ENCODE measurements at regions of chr5 and their contacts with region 1.

Region 1: DNA sequence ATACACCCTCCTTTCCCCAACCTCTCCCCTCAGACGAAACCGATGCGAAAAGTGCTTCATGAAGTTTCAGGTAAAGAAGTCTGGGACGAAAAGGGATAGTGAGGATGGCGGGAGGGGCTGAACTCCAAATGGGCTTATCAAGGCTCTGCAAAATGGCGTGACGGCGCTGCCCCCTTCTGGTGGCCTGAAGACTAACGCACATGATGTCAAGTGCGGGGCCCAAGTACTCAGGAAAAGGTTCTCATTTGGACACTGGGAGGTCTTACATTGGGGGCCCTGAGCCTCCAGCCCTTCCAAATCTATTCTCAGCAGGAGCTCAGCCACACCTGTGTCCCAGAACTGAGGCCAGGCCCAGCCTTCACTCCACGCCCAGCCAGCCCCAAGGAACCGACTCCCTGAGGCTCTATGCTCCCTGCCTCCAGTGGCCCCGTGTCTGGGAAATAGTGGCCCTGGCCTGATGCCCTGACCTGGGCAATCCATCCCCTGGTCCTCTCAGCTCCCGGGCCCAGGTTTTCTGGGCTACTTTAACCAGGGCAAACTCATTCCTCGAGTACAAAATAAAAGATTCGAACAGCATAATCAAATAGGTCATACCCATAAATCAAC is 119.9 kb downstream of the KCNIP1 start:
- DNase-seq: peak; percentile 56
- H3K4me3 ChIP-seq: no peak overlapping the region
- H3K27ac ChIP-seq: no peak overlapping the region
- H3K4me1 ChIP-seq: no peaks in the 10 kb centered on the region
- H3K27me3 ChIP-seq: no peaks in the 10 kb centered on the region
- CTCF ChIP-seq: peak; percentile 67

Region 2: DNA sequence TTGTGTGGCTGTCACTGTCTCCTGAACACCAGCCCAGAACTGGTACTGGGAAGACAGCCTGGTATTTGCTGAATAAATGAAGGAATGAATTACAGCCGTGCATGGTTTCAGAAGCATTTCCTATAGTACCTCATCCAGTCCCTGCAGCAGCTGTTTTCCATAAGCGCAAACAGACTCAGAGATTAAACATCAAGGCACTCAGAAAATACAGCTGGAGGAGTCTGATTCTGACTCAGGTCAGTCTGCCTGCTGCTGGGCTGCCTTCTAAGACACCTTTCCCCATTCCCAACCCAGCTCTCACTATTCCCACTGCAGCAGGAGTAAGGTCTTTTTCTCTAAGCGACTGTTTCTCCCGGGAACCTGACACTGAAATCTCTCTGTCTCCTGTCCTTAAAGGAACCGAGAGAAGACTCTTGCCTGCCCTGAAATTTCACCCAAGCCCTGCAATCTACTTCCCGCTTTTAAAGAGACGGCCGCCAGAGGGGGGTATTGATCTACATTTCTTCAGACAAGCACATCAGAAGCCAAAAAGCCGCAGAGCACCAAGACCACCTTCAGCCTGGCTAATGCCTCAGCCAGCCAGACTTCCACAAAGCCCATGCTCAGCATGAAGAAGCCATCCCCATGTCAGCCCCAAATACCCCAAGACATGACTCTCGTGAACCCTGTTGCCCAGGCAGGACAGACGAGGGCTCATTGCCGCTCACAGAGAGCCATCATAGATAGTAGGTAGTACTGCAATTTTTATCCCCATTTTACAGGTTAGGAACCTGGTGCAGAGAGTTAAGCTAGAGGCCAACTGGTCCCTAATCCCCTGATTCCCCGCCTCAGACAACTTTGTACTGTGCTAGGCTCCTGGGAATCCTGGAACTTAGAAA is 523.4 kb before region 1 on chr5:
- CTCF ChIA-PET with region 1: no interaction called
- POLR2A ChIA-PET with region 1: no interaction called
- intact Hi-C with region 1: no loop called
- DNase-seq: peak; percentile 86
- H3K4me3 ChIP-seq: no peak overlapping the region
- H3K27ac ChIP-seq: no peak overlapping the region
- H3K4me1 ChIP-seq: no peaks in the 10 kb centered on the region
- H3K27me3 ChIP-seq: no peaks in the 10 kb centered on the region
- CTCF ChIP-seq: peak; percentile 71

Region 3: GRCh38 chr5:170434966-170435605 is 188.6 kb before region 1 on chr5:
- CTCF ChIA-PET with region 1: no interaction called
- POLR2A ChIA-PET with region 1: no interaction called
- intact Hi-C with region 1: loop called (anchors 2 kb)
- DNase-seq: peak; percentile 43
- H3K4me3 ChIP-seq: no peak overlapping the region
- H3K27ac ChIP-seq: no peak overlapping the region
- H3K4me1 ChIP-seq: peaks cover 6% of the 10 kb centered on the region
- H3K27me3 ChIP-seq: no peaks in the 10 kb centered on the region
- CTCF ChIP-seq: peak; percentile 87

Region 4: DNA sequence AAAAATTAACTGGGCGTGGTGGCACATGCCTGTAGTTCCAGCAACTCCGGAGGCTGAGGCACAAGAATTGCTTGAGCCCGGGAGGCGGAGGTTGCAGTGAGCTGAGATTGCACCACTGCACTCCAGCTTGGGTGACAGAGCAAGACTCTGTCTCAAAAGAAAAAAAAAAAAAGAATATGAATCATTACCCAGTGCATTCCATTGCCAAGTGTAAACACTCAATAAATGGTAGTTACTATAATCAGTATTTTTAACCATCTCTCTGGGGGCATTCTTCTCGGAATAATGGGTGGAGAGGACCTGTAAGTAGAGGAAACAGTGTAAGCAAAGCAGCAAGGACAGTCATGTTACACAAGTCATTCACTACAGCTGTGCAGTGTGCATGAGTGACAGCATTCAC is 224.4 kb after region 1 on chr5:
- CTCF ChIA-PET with region 1: no interaction called
- POLR2A ChIA-PET with region 1: no interaction called
- intact Hi-C with region 1: no loop called
- DNase-seq: no peak
- H3K4me3 ChIP-seq: no peak overlapping the region
- H3K27ac ChIP-seq: no peak overlapping the region
- H3K4me1 ChIP-seq: no peaks in the 10 kb centered on the region
- H3K27me3 ChIP-seq: no peaks in the 10 kb centered on the region
- CTCF ChIP-seq: no peak

Measured in A673 (cell line).